ENCODE measurements at regions of chr2 and their contacts with region 1.

Region 1: GRCh38 chr2:69559442-69560146 is 83.9 kb downstream of the AAK1 start:
- DNase-seq: no peak
- ATAC-seq: peak; percentile 75

Region 2: GRCh38 chr2:69604026-69604678 is 44.6 kb after region 1 on chr2:
- intact Hi-C with region 1: no loop called
- DNase-seq: no peak
- ATAC-seq: peak; percentile 23 to 63

Region 3: GRCh38 chr2:69715964-69716363 is 156.4 kb after region 1 on chr2:
- intact Hi-C with region 1: loop called (anchors 2 to 5 kb)
- DNase-seq: no peak
- ATAC-seq: no peak

Region 4: GRCh38 chr2:69755862-69756467 is 196.4 kb after region 1 on chr2:
- intact Hi-C with region 1: no loop called
- DNase-seq: no peak
- ATAC-seq: peak in 1 of 2 donors; percentile 88

Region 5: GRCh38 chr2:69975500-69976462 is 416.2 kb after region 1 on chr2:
- intact Hi-C with region 1: no loop called
- DNase-seq: no peak
- ATAC-seq: no peak

Measured in left cardiac atrium (tissue), 4 donors.